Activated CD4-positive, alpha-beta T cell treated with anti-CD3 and anti-CD28 coated beads, Interleukin-2, amount 10 ng/mL, durations not matched to agents 24 days and 14 days (primary cell): ENCODE measurements at regions of chr2 and their contacts with region 1.

Region 1: GRCh38 chr2:219160186-219161017 is at the start of gene NHEJ1:
- DNase-seq: peak; percentile 98
- H3K4me3 Mint-ChIP-seq: peak within 1 kb of the TSS; percentile 88
- H3K27ac Mint-ChIP-seq: peak within 1 kb of the TSS; percentile 97
- H3K4me1 Mint-ChIP-seq: peaks cover 20% of the 10 kb centered on the region
- H3K27me3 Mint-ChIP-seq: no peaks in the 10 kb centered on the region
- total RNA-seq, gene NHEJ1: 20.7 and 22.8 TPM in 2 replicates

Region 2: GRCh38 chr2:219206442-219207253 is 46.2 kb after region 1 on chr2 and contains the start of gene ZFAND2B:
- intact Hi-C with region 1: loop called (anchors 1 kb)
- DNase-seq: peak; percentile 99
- H3K4me3 Mint-ChIP-seq: peak within 1 kb of the TSS; percentile 83
- H3K27ac Mint-ChIP-seq: peak within 1 kb of the TSS; percentile 92
- H3K4me1 Mint-ChIP-seq: peaks cover 35% of the 10 kb centered on the region
- H3K27me3 Mint-ChIP-seq: no peaks in the 10 kb centered on the region
- total RNA-seq, gene ZFAND2B: 36.7 and 37.4 TPM in 2 replicates

Region 3: DNA sequence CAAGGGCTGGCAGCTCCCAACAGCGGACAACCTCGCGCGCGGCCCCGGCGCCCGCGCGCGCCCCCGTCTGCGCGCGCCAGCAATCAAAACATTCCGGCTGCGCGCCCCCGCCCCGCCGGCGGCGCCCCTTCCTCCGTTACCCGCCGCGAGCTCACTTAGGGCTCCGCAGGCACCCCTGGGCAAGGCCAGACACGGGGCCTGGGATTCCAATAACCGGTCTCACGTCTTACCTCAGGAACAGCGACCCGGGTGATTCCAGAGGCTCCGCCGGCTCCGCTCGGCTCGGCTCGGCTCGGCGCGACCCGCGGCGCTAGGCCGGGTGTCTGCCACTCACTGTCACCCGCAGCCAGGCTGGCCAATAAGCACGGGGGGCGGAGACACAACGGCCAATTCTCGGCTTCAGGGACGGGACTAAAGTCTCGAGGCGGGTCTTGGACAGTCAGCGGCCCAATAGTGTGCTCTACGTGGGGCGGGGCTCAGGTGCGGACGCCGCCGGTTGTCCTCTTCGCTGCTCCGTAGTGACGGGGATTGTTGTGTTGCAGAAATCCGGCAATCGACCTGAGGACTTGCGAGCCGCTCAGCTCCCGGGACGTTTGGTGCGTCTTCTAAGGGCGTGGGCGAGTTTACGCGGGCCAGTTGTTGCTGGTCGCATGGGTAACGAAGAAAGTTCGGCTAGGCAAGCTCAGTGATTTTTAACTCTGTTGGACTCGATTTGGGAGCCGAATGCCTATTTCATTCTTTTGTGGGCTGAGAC is 69.1 kb after region 1 on chr2 and contains the starts of genes ANKZF1 and ATG9A:
- intact Hi-C with region 1: loop called (anchors 1 kb)
- DNase-seq: peak; percentile 100
- H3K4me3 Mint-ChIP-seq: peak within 1 kb of the TSS; percentile 92
- H3K27ac Mint-ChIP-seq: peak within 1 kb of the TSS; percentile 98
- H3K4me1 Mint-ChIP-seq: peaks cover 43% of the 10 kb centered on the region
- H3K27me3 Mint-ChIP-seq: no peaks in the 10 kb centered on the region
- total RNA-seq, gene ANKZF1: 144 and 149 TPM in 2 replicates
- total RNA-seq, gene ATG9A: 61.6 and 67.2 TPM in 2 replicates

Region 4: GRCh38 chr2:219294356-219295351 is 134.3 kb after region 1 on chr2:
- intact Hi-C with region 1: loop called (anchors 1 kb)
- DNase-seq: peak; percentile 97
- H3K4me3 Mint-ChIP-seq: peak overlapping the region; percentile 84
- H3K27ac Mint-ChIP-seq: peak overlapping the region; percentile 97
- H3K4me1 Mint-ChIP-seq: peaks cover 17% of the 10 kb centered on the region
- H3K27me3 Mint-ChIP-seq: peaks cover 6% of the 10 kb centered on the region